ENCODE measurements at regions of chr5 and their contacts with region 1.

Region 1: DNA sequence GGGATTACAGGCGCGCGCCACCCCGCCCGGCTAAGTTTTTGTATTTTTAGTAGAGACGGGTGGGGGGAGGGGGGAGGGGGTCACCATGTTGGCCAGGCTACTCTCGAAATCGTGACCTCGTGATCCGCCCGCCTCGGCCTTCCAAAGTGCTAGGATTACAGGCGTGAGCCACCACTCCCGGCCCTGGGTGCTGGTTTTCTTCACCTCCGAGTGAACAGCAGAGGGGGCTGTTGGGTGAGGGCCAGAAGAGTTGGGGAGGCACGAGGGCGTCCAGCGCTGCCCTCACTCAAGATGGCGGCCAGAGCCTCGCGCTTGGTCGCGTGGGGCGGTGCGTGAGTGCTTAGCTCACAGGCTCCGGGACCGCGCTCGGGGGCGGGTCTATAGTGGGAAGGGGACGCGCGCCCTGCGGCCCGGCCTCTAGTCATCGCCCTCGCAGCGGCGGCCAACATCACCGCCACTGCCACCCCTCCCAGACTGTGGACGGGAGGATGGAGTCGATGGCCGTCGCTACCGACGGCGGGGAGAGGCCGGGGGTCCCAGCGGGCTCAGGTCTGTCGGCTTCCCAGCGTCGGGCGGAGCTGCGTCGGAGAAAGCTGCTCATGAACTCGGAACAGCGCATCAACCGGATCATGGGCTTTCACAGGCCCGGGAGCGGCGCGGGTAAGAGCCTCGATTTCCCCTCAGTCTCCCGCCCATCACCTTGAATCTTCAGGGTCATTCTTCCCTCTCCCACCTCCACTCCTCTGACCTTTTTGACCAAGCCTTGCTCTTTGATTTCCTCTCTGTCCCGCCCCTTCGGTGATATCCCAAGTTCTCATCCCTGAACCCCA is at the start of gene CAMLG:
- DNase-seq: peak; percentile 98 to 99 (median 98)
- H3K4me3 ChIP-seq: peak within 1 kb of the TSS; percentile 90 to 96 (median 91)
- H3K4me3 Mint-ChIP-seq: peak within 1 kb of the TSS; percentile 96 to 98
- H3K27ac ChIP-seq: peak within 1 kb of the TSS; percentile 92 to 94
- H3K27ac Mint-ChIP-seq: peak within 1 kb of the TSS; percentile 94 to 98 (median 97)
- H3K4me1 ChIP-seq: peaks cover 39 to 43% of the 10 kb centered on the region in 2 donors
- H3K4me1 Mint-ChIP-seq: peaks cover 31% of the 10 kb centered on the region
- H3K27me3 ChIP-seq: no peaks in the 10 kb centered on the region
- H3K27me3 Mint-ChIP-seq: no peaks in the 10 kb centered on the region
- CTCF ChIP-seq: peak; percentile 76
- polyA plus RNA-seq, gene CAMLG: 17.5 to 20.8 (median 17.8) TPM

Region 2: DNA sequence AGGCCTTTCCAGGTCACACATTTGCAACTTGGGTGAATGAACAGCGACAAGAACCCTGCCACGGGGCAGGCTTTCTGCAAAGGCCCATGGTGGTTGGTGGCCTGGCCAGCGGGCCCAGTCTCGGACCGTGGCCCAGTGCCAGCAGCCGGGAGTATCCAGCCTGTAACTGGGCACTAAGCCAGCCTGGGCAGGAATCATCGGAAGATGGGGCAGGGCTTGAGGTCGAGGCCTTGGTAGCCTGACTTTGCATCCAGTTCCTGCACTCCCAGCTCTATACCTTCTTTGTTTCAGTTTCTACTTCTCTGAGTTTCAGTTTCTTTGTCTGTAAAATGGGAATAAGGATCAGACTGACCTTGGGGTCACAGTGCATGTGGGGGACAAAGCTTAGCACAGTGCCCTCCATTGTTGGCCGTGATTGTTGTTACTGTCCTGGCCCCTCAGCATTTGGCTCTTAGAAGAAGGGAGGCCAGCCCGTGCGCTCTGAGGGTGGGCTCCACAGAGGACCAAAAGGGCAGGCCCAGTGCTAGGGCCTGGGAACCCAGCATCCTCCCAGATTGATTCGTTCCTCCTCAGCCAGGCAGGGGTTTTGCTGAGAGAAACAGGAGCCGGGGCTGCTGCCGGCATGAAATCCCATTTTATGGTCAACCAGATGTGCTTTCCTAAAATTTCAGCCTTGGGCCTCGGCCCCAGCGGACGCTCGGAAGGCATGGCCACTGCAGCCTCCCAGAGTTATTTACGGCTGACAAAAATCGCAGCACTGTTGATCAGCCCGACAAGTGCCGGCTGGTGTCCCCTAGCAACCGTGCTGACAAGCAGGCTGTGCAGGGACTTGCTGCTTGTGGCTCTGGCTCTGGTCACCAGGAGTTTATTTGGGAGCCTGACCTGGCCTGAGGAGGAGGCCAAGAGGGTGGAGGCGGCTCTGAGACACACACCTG is 169.3 kb before region 1 on chr5:
- intact Hi-C with region 1: no loop called
- DNase-seq: no peak
- H3K4me3 ChIP-seq: no peak overlapping the region
- H3K4me3 Mint-ChIP-seq: no peak overlapping the region
- H3K27ac ChIP-seq: peak overlapping the region in 1 of 2 donors; percentile 71
- H3K27ac Mint-ChIP-seq: peak overlapping the region in 5 of 7 donors; percentile 26 to 87 (median 55)
- H3K4me1 ChIP-seq: peaks cover 17 to 21% of the 10 kb centered on the region in 2 donors
- H3K4me1 Mint-ChIP-seq: peaks cover 18% of the 10 kb centered on the region
- H3K27me3 ChIP-seq: no peaks in the 10 kb centered on the region
- H3K27me3 Mint-ChIP-seq: peaks cover 0 to 8% (median 2%) of the 10 kb centered on the region in 3 donors
- CTCF ChIP-seq: no peak

Region 3: GRCh38 chr5:134648425-134649162 is 89.8 kb before region 1 on chr5 and contains the start of gene SEC24A:
- intact Hi-C with region 1: loop called (anchors 5 to 10 kb)
- DNase-seq: peak; percentile 92 to 100 (median 96)
- H3K4me3 ChIP-seq: peak within 1 kb of the TSS; percentile 86 to 91 (median 91)
- H3K4me3 Mint-ChIP-seq: peak within 1 kb of the TSS; percentile 94 to 95
- H3K27ac ChIP-seq: peak within 1 kb of the TSS; percentile 98 to 99
- H3K27ac Mint-ChIP-seq: peak within 1 kb of the TSS; percentile 98 to 100 (median 100)
- H3K4me1 ChIP-seq: peaks cover 20 to 31% of the 10 kb centered on the region in 2 donors
- H3K4me1 Mint-ChIP-seq: peaks cover 32% of the 10 kb centered on the region
- H3K27me3 ChIP-seq: no peaks in the 10 kb centered on the region
- H3K27me3 Mint-ChIP-seq: peaks cover 0 to 2% (median 2%) of the 10 kb centered on the region in 3 donors
- CTCF ChIP-seq: no peak
- polyA plus RNA-seq, gene SEC24A: 4.9 to 8.5 (median 7.7) TPM

Region 4: DNA sequence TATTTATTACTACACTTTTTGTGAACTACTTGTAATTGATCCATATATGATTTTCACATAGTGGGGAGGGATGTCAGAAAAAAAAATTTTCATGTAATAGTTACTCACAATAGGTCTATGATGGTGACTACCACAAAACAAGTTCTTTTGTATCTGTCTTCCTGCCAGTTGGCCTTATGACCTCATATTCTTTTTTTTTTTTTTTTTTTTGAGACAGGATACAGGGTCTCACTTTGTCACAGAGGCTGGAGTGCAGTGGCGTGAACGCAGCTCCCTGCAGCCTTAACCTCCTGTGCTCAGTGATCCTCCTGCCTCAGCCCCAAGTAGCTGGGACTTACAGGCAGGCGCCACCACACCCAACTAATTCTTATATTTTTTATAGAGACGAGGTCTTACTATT is 78.9 kb before region 1 on chr5:
- intact Hi-C with region 1: loop called in 1 of 2 experiments (anchors 10 kb)
- DNase-seq: no peak
- H3K4me3 ChIP-seq: no peak overlapping the region
- H3K4me3 Mint-ChIP-seq: no peak overlapping the region
- H3K27ac ChIP-seq: no peak overlapping the region
- H3K27ac Mint-ChIP-seq: no peak overlapping the region
- H3K4me1 ChIP-seq: no peaks in the 10 kb centered on the region
- H3K4me1 Mint-ChIP-seq: no peaks in the 10 kb centered on the region
- H3K27me3 ChIP-seq: no peaks in the 10 kb centered on the region
- H3K27me3 Mint-ChIP-seq: no peaks in the 10 kb centered on the region
- CTCF ChIP-seq: no peak

Region 5: DNA sequence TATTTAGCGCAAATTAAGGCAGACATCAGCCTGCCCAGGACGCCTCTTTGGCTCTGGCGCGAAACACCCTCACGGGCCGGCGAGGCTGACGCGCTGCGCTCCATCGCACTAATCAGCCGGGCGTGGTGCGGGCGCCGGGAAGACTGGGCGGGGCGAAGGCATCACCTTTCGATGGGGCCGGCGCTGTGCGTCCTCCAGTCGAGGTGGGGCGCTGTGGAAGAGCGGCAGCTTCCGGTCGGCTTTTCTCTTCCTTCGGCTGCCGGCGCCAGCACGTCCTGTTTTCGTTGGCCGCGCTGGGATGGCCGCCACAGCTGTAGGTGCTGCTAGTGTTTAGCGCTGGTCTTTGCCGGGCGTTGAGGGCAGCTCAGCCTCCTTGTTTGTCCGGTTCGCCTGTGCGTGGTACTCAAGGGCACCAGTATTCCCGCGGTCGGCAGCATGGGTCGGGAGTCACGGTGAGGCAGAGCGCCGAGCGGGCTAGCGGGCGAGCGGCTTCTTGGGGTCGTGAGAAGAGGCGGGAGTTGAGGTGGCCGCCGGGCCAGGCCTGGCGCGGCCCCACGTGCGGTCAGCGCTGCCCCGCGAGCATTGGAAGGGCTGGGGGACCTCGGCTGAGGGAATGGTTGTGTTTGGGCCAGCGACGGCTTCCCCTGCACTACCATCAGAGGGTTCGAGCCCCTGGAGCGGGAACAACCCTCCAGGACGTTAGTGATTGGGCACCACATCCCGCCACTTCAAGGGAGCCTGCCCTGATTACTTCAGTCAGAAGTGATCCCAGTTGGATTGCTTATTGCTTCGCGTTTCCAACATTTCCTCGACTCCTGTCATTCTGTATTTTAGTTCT is 20.4 kb after region 1 on chr5 and contains the start of gene DDX46:
- intact Hi-C with region 1: loop called in 1 of 2 experiments (anchors 1 kb)
- DNase-seq: peak; percentile 87 to 91 (median 89)
- H3K4me3 ChIP-seq: peak within 1 kb of the TSS; percentile 75 to 91 (median 82)
- H3K4me3 Mint-ChIP-seq: peak within 1 kb of the TSS; percentile 99 to 100
- H3K27ac ChIP-seq: peak within 1 kb of the TSS; percentile 48 to 86
- H3K27ac Mint-ChIP-seq: peak within 1 kb of the TSS; percentile 90 to 98 (median 95)
- H3K4me1 ChIP-seq: peaks cover 25 to 29% of the 10 kb centered on the region in 2 donors
- H3K4me1 Mint-ChIP-seq: peaks cover 32% of the 10 kb centered on the region
- H3K27me3 ChIP-seq: no peaks in the 10 kb centered on the region
- H3K27me3 Mint-ChIP-seq: peaks cover 0 to 1% (median 0%) of the 10 kb centered on the region in 3 donors
- CTCF ChIP-seq: peak; percentile 82
- polyA plus RNA-seq, gene DDX46: 7.6 to 22.3 (median 11.8) TPM

Region 6: GRCh38 chr5:134784241-134784920 is 46.0 kb after region 1 on chr5:
- intact Hi-C with region 1: no loop called
- DNase-seq: no peak
- H3K4me3 ChIP-seq: no peak overlapping the region
- H3K4me3 Mint-ChIP-seq: no peak overlapping the region
- H3K27ac ChIP-seq: no peak overlapping the region
- H3K27ac Mint-ChIP-seq: no peak overlapping the region
- H3K4me1 ChIP-seq: no peaks in the 10 kb centered on the region
- H3K4me1 Mint-ChIP-seq: no peaks in the 10 kb centered on the region
- H3K27me3 ChIP-seq: no peaks in the 10 kb centered on the region
- H3K27me3 Mint-ChIP-seq: no peaks in the 10 kb centered on the region
- CTCF ChIP-seq: no peak

Region 7: GRCh38 chr5:134873987-134874830 is 135.9 kb after region 1 on chr5 and contains the start of gene TXNDC15:
- intact Hi-C with region 1: loop called in 1 of 2 experiments (anchors 5 kb)
- DNase-seq: peak; percentile 76 to 88 (median 80)
- H3K4me3 ChIP-seq: peak within 1 kb of the TSS; percentile 60 to 77 (median 77)
- H3K4me3 Mint-ChIP-seq: peak within 1 kb of the TSS; percentile 94 to 96
- H3K27ac ChIP-seq: peak within 1 kb of the TSS; percentile 81 to 82
- H3K27ac Mint-ChIP-seq: peak within 1 kb of the TSS; percentile 86 to 96 (median 92)
- H3K4me1 ChIP-seq: peaks cover 13 to 20% of the 10 kb centered on the region in 2 donors
- H3K4me1 Mint-ChIP-seq: peaks cover 25% of the 10 kb centered on the region
- H3K27me3 ChIP-seq: no peaks in the 10 kb centered on the region
- H3K27me3 Mint-ChIP-seq: peaks cover 0 to 2% (median 0%) of the 10 kb centered on the region in 3 donors
- CTCF ChIP-seq: no peak
- polyA plus RNA-seq, gene TXNDC15: 24.1 to 30.9 (median 28.0) TPM

Region 8: DNA sequence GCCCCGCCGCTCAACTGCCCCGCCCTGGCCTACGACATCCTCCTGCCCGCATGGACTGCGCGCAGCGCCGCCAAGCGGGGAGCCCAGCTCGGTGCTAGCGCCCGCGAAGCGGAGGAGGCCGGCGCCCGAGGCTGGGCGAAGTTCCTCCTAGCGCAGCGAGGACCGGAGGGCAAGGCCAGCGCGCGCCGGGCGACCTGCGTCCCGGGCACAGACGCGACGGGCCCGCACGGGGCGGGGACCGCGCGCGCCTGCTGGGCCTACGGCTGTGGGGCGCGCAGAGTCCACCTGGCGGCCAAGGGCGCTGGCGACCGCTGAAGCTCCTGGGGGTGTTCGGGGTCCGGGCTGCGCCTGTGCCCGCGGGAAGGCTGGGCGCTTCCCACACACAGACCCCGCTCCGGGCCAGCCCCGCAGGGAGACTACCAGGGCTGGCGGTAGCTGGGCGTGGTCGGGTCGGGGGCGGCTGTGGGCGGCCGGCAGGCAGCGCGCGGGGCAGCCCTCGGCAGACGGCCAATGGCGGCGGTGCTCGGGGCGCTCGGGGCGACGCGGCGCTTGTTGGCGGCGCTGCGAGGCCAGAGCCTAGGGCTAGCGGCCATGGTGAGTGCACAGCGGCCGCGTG is 166.4 kb after region 1 on chr5 and contains the start of gene PCBD2:
- intact Hi-C with region 1: loop called in 1 of 2 experiments (anchors 2 kb)
- DNase-seq: peak; percentile 90 to 94 (median 92)
- H3K4me3 ChIP-seq: peak within 1 kb of the TSS; percentile 86 to 99 (median 98)
- H3K4me3 Mint-ChIP-seq: peak within 1 kb of the TSS; percentile 85 to 92
- H3K27ac ChIP-seq: peak within 1 kb of the TSS; percentile 92 to 94
- H3K27ac Mint-ChIP-seq: peak within 1 kb of the TSS; percentile 86 to 97 (median 95)
- H3K4me1 ChIP-seq: peaks cover 20 to 34% of the 10 kb centered on the region in 2 donors
- H3K4me1 Mint-ChIP-seq: peaks cover 20% of the 10 kb centered on the region
- H3K27me3 ChIP-seq: no peaks in the 10 kb centered on the region
- H3K27me3 Mint-ChIP-seq: no peaks in the 10 kb centered on the region
- CTCF ChIP-seq: peak; percentile 80
- polyA plus RNA-seq, gene PCBD2: 9.0 to 12.6 (median 9.0) TPM

Measured in CD14-positive monocyte (primary cell).